Motor neuron (in vitro differentiated cells): ENCODE measurements at regions of chr1 and their contacts with region 1.

Region 1: DNA sequence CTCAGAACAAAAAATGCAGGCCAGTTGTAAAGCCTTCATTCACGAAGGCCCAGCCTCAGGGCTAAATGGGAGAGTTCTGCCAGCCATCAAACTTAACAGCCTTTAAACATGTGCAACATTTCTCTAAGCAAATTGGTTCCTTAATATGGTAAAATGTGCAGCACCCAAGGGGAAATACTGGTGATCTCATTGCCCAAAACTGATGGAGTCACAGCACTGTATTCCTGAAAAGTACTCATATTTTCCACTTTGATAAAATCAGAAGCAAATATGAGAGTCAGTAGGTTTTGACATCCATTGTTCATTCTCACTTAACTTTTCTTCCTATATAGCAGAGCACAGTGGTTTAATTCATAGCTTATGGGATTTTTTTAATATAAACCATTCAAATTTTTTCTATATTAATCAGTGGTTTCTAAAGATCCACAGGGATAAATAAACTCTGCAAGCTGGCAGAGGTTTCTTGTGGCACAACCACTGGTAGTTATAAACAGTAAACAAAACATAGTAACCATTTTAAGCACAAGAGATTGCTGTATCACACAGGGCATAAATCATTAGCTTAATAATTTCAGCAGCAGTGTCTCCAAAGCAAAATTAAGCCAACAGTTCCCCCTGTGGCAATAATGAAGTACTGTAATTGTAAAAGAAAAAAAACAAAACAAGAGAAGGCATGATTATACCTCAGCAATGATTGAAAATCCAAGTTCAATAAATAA is 106.9 kb upstream of the LYPLAL1 start:
- ATAC-seq: peak; percentile 36 to 94 (median 47)
- H3K4me3 ChIP-seq: no peak overlapping the region
- H3K27ac ChIP-seq: no peak overlapping the region
- H3K4me1 ChIP-seq: peaks cover 0 to 11% of the 10 kb centered on the region in 2 donors

Region 2: DNA sequence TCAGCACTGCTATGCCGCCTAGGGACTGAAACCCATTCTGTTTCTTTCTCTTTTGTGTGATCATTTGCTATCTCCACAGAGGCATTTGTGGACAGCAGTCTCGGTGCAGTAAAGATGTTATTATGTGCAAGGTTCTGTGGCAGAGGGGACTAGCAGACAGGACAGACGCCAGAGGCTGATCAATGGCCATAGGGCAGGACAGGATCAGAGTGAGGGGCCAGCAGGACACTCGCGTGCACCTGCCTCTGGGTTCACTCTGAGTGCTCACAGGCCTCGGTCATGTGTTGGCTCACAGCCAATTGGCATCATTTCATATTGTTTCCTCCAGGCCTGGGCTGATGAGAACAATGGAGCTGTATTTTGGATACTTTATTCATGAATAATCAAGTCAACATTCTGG is 509.1 kb before region 1 on chr1:
- in situ Hi-C with region 1: loop called in 1 of 9 experiments (anchors 25 kb)
- ATAC-seq: peak in 6 of 8 experiments; percentile 49 to 99 (median 88)
- H3K4me3 ChIP-seq: no peak overlapping the region
- H3K27ac ChIP-seq: peak overlapping the region; percentile 0 to 1
- H3K4me1 ChIP-seq: peaks cover 9% of the 10 kb centered on the region in 2 donors

Region 3: GRCh38 chr1:219544163-219544846 is 477.5 kb after region 1 on chr1:
- in situ Hi-C with region 1: no loop called
- ATAC-seq: peak in 1 of 8 experiments; percentile 16
- H3K4me3 ChIP-seq: no peak overlapping the region
- H3K27ac ChIP-seq: no peak overlapping the region
- H3K4me1 ChIP-seq: no peaks in the 10 kb centered on the region